ENCODE measurements at regions of chr17 and their contacts with region 1.

Region 1: DNA sequence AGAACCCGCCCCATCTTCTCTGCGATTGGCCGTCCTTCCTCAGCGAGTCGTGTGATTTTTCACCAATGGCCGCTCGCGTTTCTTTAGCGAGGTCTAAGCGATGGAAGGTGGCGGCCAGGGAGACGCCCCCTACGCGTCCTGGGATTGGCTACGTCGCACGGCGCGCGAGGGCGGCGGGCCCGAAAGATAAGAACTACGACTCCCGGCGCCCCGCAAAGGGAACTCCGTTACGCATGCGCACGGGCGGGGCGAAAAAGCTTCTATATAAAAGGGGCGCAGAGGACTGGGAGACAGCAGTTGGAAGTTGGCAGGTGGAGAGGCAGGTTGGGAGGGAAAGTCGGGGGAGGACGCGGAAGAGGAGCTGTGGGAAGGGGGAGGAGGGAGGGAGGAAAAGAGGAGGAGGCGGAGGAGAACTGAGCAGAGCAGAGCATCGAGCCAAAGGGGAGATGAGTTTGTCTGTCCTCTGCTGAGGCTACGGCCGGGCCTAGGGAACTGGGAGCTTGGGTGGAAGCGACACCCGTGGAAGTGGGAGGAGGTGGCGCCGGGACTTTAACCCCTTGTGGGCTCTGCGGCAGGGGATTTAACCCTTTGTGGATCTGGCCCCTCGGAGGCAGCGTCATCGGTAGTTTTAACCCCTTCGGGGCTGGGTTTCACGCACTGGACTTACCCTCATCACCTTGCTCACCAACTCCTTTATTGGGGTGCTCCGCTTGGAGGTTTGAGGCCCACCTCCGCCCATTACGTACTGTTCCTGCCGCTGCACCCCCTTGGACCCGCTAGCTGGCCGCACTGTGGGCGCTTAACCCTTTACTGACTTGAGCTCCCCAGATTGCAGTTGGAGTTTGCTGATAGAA is at the start of gene HEXIM1:
- DNase-seq: peak; percentile 99 to 100
- ATAC-seq: peak; percentile 90
- H3K4me3 ChIP-seq: peak within 1 kb of the TSS; percentile 60 to 83
- H3K27ac ChIP-seq: peak within 1 kb of the TSS; percentile 85 to 94
- H3K4me1 ChIP-seq: peaks cover 0 to 2% of the 10 kb centered on the region in 2 donors
- H3K27me3 ChIP-seq: peaks cover 0 to 2% of the 10 kb centered on the region in 2 donors
- total RNA-seq, gene HEXIM1: 48.7 to 64.0 TPM

Region 2: GRCh38 chr17:45161019-45161825 is 12.8 kb after region 1 on chr17:
- intact Hi-C with region 1: loop called in 1 of 2 experiments (anchors 1 kb)
- DNase-seq: peak; percentile 99
- ATAC-seq: peak; percentile 97
- H3K4me3 ChIP-seq: peak overlapping the region; percentile 69 to 76
- H3K27ac ChIP-seq: peak overlapping the region; percentile 78 to 95
- H3K4me1 ChIP-seq: no peaks in the 10 kb centered on the region
- H3K27me3 ChIP-seq: no peaks in the 10 kb centered on the region

Region 3: GRCh38 chr17:45172454-45173286 is 24.3 kb after region 1 on chr17:
- intact Hi-C with region 1: loop called in 1 of 2 experiments (anchors 2 kb)
- DNase-seq: peak; percentile 87 to 90
- ATAC-seq: peak; percentile 69
- H3K4me3 ChIP-seq: peak overlapping the region; percentile 29 to 47
- H3K27ac ChIP-seq: peak overlapping the region; percentile 77 to 98
- H3K4me1 ChIP-seq: peaks cover 0 to 2% of the 10 kb centered on the region in 2 donors
- H3K27me3 ChIP-seq: no peaks in the 10 kb centered on the region

Region 4: GRCh38 chr17:45197555-45198334 is 49.3 kb after region 1 on chr17:
- intact Hi-C with region 1: loop called in 1 of 2 experiments (anchors 1 kb)
- DNase-seq: peak; percentile 94 to 98
- ATAC-seq: peak; percentile 97
- H3K4me3 ChIP-seq: no peak overlapping the region
- H3K27ac ChIP-seq: no peak overlapping the region
- H3K4me1 ChIP-seq: no peaks in the 10 kb centered on the region
- H3K27me3 ChIP-seq: no peaks in the 10 kb centered on the region

Region 5: DNA sequence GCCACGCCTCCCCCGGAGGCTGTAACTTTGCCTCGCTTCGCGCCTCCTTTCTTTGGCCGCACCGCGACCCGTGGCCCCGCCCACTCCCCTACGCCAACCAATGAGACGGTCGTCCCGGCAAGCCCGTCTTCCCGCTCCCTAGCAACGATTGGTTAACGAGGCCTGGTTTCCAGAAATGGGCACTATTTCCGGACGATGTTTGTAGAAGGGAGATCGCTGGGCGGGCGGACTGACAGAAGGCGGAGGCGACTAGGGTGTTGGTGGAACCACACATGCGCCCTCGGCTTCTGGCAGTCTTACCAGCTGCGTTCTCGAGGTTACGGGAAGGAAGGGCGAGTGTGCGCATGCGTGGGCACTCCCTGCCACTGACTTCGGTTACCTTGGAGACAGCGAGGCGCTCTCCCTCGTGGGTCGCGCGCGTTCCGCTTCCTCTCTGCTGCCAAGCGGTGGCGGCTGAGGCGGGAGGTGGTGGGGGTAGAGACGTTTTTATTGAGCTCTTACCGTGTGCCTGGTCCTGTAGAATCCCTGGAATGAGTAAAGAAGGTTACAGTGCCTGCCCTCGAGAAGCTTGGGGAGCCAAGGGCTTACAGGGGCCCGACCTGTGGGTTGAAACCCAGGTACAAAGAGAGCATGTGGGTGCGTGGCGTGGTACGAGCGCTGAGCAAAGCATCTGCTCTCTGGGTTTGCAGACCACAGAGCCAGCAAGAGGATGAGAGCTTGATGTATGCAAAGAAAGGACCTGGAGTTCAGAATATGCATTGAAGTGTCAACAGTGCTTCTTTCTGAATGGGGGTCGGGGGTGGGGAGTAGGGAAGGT is 168.9 kb after region 1 on chr17:
- intact Hi-C with region 1: loop called in 1 of 2 experiments (anchors 10 kb)
- DNase-seq: peak; percentile 100
- ATAC-seq: peak; percentile 96
- H3K4me3 ChIP-seq: no peak overlapping the region
- H3K27ac ChIP-seq: peak overlapping the region in 1 of 2 donors; percentile 34
- H3K4me1 ChIP-seq: no peaks in the 10 kb centered on the region
- H3K27me3 ChIP-seq: no peaks in the 10 kb centered on the region

Measured in aorta (tissue), 5 donors.